Panc1 (cell line): ENCODE measurements at regions of chr1 and their contacts with region 1.

Region 1: DNA sequence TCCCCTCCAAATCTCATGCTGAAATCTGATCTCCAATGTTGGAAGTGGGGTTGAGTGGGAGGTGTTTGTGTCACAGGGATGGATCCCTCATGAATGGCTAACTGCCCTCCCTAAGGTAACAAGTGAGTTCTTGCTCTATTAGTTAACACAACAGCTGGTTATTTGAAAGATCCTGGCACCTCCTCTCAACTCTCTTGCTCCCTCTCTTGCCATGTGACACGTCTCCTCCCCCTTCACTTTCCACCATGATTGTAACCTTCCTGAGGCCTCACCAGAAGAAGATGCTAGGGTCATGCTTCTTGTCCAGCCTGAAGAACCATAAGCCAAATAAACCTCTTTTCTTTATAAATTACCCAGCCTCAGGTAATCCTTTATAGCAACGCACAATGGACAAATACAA is 28.5 kb downstream of the DENND2C start:
- DNase-seq: no peak
- ATAC-seq: no peak
- H3K4me3 ChIP-seq: no peak overlapping the region
- H3K27ac ChIP-seq: no peak overlapping the region
- H3K4me1 ChIP-seq: no peaks in the 10 kb centered on the region
- H3K27me3 ChIP-seq: no peaks in the 10 kb centered on the region
- CTCF ChIP-seq: no peak

Region 2: GRCh38 chr1:114342376-114342775 is 299.0 kb before region 1 on chr1:
- CTCF ChIA-PET with region 1: no interaction called
- POLR2A ChIA-PET with region 1: no interaction called
- in situ Hi-C with region 1: no loop called
- intact Hi-C with region 1: no loop called
- DNase-seq: no peak
- ATAC-seq: no peak
- H3K4me3 ChIP-seq: no peak overlapping the region
- H3K27ac ChIP-seq: no peak overlapping the region
- H3K4me1 ChIP-seq: no peaks in the 10 kb centered on the region
- H3K27me3 ChIP-seq: peaks cover 3% of the 10 kb centered on the region
- CTCF ChIP-seq: no peak

Region 3: DNA sequence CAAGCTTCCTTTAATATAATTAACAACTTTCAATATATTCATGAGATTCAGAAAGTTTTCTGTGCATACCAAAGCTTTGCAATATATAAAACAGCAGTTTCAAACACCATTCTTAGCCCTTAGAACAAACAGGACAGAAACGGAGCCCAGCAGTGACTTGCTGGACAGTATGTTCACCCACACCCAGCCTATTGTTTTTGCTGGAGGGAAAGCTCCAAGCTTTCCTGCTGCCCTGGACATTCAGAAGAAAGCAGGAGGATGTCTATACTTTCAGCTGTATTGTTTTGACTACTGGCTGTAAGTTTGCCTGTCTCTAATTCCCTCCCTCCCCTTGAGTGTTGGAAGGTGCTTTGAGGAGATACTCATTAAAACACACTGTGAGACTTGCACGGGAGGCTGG is 18.8 kb after region 1 on chr1:
- CTCF ChIA-PET with region 1: no interaction called
- POLR2A ChIA-PET with region 1: no interaction called
- in situ Hi-C with region 1: no loop called
- intact Hi-C with region 1: loop called (anchors 1 kb)
- DNase-seq: no peak
- ATAC-seq: no peak
- H3K4me3 ChIP-seq: no peak overlapping the region
- H3K27ac ChIP-seq: no peak overlapping the region
- H3K4me1 ChIP-seq: no peaks in the 10 kb centered on the region
- H3K27me3 ChIP-seq: no peaks in the 10 kb centered on the region
- CTCF ChIP-seq: no peak

Region 4: GRCh38 chr1:114854693-114855320 is 213.4 kb after region 1 on chr1 and contains the start of gene SYCP1:
- CTCF ChIA-PET with region 1: no interaction called
- POLR2A ChIA-PET with region 1: no interaction called
- in situ Hi-C with region 1: no loop called
- intact Hi-C with region 1: no loop called
- DNase-seq: no peak
- ATAC-seq: no peak
- H3K4me3 ChIP-seq: no peak within 1 kb of the TSS
- H3K27ac ChIP-seq: no peak within 1 kb of the TSS
- H3K4me1 ChIP-seq: no peaks in the 10 kb centered on the region
- H3K27me3 ChIP-seq: no peaks in the 10 kb centered on the region
- CTCF ChIP-seq: no peak
- total RNA-seq, gene SYCP1: not detected